HEK293 (cell line): ENCODE measurements at regions of chr2 and their contacts with region 1.

Region 1: GRCh38 chr2:109545828-109546713 is 67.7 kb downstream of the SEPTIN10 start:
- H3K4me3 ChIP-seq: no peak overlapping the region
- H3K27ac ChIP-seq: no peak overlapping the region
- H3K4me1 ChIP-seq: no peaks in the 10 kb centered on the region
- CTCF ChIP-seq: peak; percentile 88

Region 2: GRCh38 chr2:108849331-108849730 is 696.7 kb before region 1 on chr2:
- CTCF ChIA-PET with region 1: no interaction called
- POLR2A ChIA-PET with region 1: no interaction called
- H3K4me3 ChIP-seq: no peak overlapping the region
- H3K27ac ChIP-seq: no peak overlapping the region
- H3K4me1 ChIP-seq: no peaks in the 10 kb centered on the region
- CTCF ChIP-seq: no peak

Region 3: DNA sequence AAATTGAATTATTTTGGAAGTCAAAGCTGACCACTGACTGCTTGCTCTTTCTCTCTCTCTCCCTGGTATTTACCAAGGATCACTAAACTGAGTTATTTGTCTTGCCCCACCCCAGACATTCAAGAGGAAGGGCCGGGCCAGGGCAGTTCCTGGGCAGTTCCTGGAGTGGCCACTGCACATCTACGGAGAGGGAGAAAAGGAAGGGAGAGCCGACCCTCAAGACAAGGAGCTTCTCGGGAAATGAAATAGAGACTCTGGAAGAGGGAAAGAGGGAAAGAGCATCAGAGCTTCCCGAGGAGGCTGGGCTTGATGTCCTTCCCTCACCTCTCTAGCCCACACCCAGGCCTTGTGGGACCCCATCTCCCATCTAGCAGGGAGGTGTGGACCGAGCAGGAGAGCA is 15.4 kb before region 1 on chr2:
- CTCF ChIA-PET with region 1: interaction called, 20 read pairs
- POLR2A ChIA-PET with region 1: no interaction called
- H3K4me3 ChIP-seq: no peak overlapping the region
- H3K27ac ChIP-seq: no peak overlapping the region
- H3K4me1 ChIP-seq: no peaks in the 10 kb centered on the region
- CTCF ChIP-seq: no peak

Region 4: DNA sequence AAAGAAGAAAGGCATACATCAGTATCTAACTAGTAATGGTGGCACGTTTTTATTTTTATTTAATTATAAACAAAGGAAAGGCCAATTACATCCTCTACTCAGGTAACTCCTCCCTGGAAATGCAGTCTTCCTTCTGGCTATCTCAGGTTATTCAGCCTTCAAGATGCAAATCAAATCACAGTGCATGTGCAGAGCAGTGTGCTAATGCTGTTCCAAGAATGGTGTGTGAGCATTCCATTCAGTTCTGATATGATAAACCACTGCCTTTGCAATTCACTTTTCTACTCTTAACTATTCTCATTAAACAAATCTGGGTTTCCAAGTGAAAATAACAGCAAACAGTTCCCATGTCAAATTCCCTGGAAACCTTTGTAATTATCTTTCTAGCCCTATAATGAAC is 29.3 kb after region 1 on chr2:
- CTCF ChIA-PET with region 1: interaction called, 13 read pairs
- POLR2A ChIA-PET with region 1: no interaction called
- H3K4me3 ChIP-seq: no peak overlapping the region
- H3K27ac ChIP-seq: no peak overlapping the region
- H3K4me1 ChIP-seq: no peaks in the 10 kb centered on the region
- CTCF ChIP-seq: no peak

Region 5: DNA sequence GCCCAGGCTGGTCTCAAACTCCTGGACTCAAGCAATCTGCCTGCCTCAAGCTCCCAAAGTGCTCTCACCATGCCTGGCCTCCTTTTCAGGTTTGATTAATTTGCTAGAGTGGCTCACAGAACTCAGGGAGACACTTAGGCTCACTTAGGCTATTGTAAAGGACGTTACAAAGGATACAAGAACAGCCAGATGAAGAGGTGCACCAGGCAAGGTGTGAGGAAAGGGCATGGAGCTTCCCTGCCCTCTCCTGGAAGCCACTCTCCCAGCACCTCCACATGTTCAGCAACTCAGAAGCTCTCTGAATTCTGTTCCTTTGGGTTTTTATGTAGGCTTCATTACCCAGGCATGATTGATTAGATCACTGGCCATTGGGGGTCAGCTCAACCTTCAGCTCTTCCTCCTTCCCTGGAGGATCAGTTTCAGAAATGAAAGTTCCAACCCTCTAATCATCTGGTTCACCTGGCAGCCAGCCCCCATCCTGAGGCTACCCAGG is 169.3 kb after region 1 on chr2:
- CTCF ChIA-PET with region 1: interaction called, 33 read pairs
- POLR2A ChIA-PET with region 1: no interaction called
- H3K4me3 ChIP-seq: no peak overlapping the region
- H3K27ac ChIP-seq: no peak overlapping the region
- H3K4me1 ChIP-seq: no peaks in the 10 kb centered on the region
- CTCF ChIP-seq: peak; percentile 53; the same call in 1 of the 2 replicates

Region 6: GRCh38 chr2:109736177-109736827 is 190.2 kb after region 1 on chr2:
- CTCF ChIA-PET with region 1: interaction called, 45 read pairs
- POLR2A ChIA-PET with region 1: no interaction called
- H3K4me3 ChIP-seq: no peak overlapping the region
- H3K27ac ChIP-seq: no peak overlapping the region
- H3K4me1 ChIP-seq: no peaks in the 10 kb centered on the region
- CTCF ChIP-seq: peak; percentile 54; the same call in 1 of the 2 replicates